Activated CD4-positive, alpha-beta T cell treated with anti-CD3 and anti-CD28 coated beads, Interleukin-2, amount 10 ng/mL, durations not matched to agents 24 days and 14 days (primary cell): ENCODE measurements at regions of chr7 and their contacts with region 1.

Region 1: GRCh38 chr7:105013221-105013815 is 687 bp upstream of the KMT2E start:
- DNase-seq: peak; percentile 98
- H3K4me3 Mint-ChIP-seq: peak overlapping the region; percentile 99
- H3K27ac Mint-ChIP-seq: peak overlapping the region; percentile 100
- H3K4me1 Mint-ChIP-seq: peaks cover 43% of the 10 kb centered on the region
- H3K27me3 Mint-ChIP-seq: peaks cover 2% of the 10 kb centered on the region

Region 2: DNA sequence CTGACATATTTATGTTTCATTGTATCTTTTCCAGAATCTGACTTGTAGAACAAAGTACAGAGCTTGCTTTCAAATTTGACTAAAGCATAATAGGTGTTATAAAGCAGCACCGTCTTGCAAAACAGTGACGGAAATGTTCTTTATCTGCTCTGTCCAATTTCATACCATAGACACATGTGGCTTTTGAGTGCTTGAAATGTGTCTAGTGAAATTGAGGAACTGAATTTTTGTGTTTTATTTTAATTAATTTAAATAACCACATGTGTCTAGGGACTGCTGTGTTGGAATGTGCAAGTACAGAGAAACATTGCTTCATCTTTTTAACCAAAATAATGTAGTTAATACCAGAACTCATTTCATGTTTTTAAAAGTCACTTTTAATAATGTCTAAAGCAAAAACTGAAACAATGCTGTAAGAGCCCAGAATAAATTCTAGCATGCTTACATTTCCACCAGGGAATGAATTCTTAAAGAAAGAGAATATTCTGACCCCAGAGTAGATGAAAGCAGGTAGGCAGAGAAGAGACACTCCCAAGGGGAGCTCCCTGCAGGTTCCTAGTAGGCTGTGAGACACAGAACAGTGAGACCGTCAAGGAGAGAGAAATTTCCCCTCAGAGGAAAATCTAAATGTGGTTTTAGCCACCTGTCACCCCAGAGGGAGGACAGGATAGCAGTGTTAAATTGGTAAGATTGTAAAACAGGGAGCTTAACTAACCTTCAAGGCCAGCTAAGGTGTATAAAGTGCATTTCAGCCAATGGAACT is 174.6 kb before region 1 on chr7:
- intact Hi-C with region 1: no loop called
- DNase-seq: no peak
- H3K4me3 Mint-ChIP-seq: no peak overlapping the region
- H3K27ac Mint-ChIP-seq: no peak overlapping the region
- H3K4me1 Mint-ChIP-seq: no peaks in the 10 kb centered on the region
- H3K27me3 Mint-ChIP-seq: peaks cover 10% of the 10 kb centered on the region

Region 3: GRCh38 chr7:104956753-104957450 is 56.4 kb before region 1 on chr7:
- intact Hi-C with region 1: loop called (anchors 1 kb)
- DNase-seq: peak; percentile 88
- H3K4me3 Mint-ChIP-seq: peak overlapping the region; percentile 72
- H3K27ac Mint-ChIP-seq: peak overlapping the region; percentile 100
- H3K4me1 Mint-ChIP-seq: peaks cover 50% of the 10 kb centered on the region
- H3K27me3 Mint-ChIP-seq: no peaks in the 10 kb centered on the region

Region 4: DNA sequence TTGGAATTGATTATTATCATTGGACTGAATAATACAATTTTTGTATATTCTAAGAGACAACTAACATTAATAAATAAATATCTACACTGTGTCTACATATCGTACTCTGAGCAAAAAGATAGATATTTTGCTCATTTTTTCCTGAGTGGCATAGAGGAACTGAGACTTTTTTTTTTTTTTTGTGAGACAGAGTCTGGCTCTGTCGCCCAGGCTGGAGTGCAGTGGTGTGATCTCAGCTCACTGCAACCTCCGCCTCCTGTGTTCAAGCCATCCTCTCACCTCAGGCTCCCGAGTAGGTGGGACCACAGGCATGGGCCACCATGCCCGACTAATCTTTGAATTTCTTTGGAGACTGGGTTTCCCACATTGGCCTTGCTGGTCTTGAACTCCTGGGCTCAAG is 14.7 kb after region 1 on chr7:
- intact Hi-C with region 1: no loop called
- DNase-seq: no peak
- H3K4me3 Mint-ChIP-seq: no peak overlapping the region
- H3K27ac Mint-ChIP-seq: no peak overlapping the region
- H3K4me1 Mint-ChIP-seq: peaks cover 59% of the 10 kb centered on the region
- H3K27me3 Mint-ChIP-seq: no peaks in the 10 kb centered on the region

Region 5: GRCh38 chr7:105098863-105099515 is 85.7 kb after region 1 on chr7:
- intact Hi-C with region 1: loop called (anchors 5 kb)
- DNase-seq: no peak
- H3K4me3 Mint-ChIP-seq: no peak overlapping the region
- H3K27ac Mint-ChIP-seq: peak overlapping the region; percentile 48
- H3K4me1 Mint-ChIP-seq: peaks cover 39% of the 10 kb centered on the region
- H3K27me3 Mint-ChIP-seq: no peaks in the 10 kb centered on the region

Region 6: DNA sequence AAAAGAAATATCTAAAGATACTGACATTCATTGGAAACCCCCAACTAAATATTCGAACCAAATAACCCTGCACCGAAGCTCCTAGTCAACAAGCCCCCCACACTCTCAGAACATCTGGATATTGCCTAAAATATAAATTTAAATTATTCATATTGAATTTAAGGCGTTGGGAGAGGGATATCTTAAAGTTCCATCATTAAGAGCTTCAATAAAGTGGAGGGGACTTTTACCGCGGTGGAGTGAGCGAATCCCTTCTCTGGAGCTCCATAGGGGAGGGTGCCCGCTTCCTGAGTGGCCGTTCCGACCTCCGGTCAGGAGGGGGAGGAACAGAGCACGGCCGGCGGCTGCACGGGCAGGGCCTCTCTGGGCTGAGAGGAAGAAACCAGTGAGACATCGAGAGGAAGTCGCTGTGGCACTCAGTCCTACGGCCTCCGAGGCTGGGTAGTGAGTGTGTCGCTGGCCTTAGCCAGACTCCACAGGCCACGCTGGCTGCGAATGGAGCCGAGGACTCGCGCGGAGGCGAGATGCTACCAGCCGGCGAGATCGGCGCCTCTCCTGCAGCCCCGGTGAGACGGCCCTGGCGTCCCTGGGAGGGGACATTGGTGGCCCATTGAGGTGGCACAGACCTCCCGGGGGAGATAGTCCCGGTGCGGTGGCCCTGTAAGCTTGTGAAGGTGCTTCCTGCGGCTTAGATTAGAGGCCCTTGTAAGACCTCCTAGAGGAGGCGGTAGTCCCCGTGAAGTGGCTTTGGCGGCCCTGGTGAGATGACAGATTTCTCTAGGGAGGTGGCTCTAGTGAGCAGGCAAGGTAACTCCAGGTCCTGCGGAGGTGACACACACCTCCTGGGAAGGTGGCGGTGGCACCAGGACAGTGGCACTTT is 518.7 kb after region 1 on chr7 and contains the start of gene RINT1:
- intact Hi-C with region 1: loop called (anchors 5 kb)
- DNase-seq: peak; percentile 97
- H3K4me3 Mint-ChIP-seq: peak within 1 kb of the TSS; percentile 93
- H3K27ac Mint-ChIP-seq: peak within 1 kb of the TSS; percentile 93
- H3K4me1 Mint-ChIP-seq: peaks cover 25% of the 10 kb centered on the region
- H3K27me3 Mint-ChIP-seq: no peaks in the 10 kb centered on the region
- total RNA-seq, gene RINT1: 28.5 and 29.4 TPM in 2 replicates